BJ (cell line): ENCODE measurements at regions of chr12 and their contacts with region 1.

Region 1: DNA sequence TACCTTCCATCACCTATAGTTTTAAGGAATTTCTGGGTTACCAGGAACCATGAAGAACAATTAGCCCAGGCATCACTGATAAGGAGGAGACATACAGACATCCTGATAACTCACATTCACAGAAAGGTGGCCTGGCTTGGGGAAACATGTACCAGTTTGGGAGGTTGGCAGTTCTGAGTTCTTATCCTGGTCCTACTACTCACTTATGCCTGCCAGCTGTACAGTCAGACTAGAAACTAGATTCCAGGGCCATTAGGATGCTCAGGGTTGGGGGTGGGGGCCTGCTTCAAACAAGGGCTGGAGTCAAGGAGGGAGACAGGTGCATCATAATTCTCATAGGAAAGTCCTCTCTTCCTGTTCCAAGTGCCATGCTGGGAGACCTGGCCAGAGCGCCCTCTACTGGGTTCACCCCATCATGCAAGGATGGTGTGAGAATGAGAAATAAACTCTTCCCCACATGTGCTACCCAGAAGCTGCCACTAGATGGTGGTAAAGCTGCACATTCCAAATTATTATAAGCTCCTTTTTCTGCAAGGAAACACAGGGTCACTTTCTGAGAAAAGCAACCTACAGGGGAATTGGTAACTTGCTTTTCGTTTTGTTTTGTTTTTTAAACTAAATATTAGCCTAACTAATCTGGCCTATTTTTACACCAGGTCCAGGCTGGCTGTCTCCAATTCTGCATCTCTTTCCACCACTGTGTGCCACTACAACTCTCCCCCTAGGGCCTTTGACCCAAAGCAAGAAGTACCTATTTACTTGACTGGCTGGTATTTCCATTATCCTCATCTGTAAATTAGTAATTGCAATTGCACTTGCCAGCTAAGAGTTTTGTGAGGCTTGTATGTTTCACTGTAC is 14.5 kb downstream of the OAS2 start:
- DNase-seq: peak; percentile 8
- H3K4me3 ChIP-seq: no peak overlapping the region
- H3K27me3 ChIP-seq: no peaks in the 10 kb centered on the region; the same call in 1 of the 2 replicates
- CTCF ChIP-seq: peak; percentile 91

Region 2: GRCh38 chr12:112978163-112979040 is 14.4 kb before region 1 on chr12 and contains the start of gene OAS2:
- CTCF ChIA-PET with region 1: interaction called, 27 read pairs
- POLR2A ChIA-PET with region 1: no interaction called
- DNase-seq: peak; percentile 50
- H3K4me3 ChIP-seq: peak within 1 kb of the TSS; percentile 23
- H3K27me3 ChIP-seq: no peaks in the 10 kb centered on the region
- CTCF ChIP-seq: no peak
- polyA plus RNA-seq, gene OAS2: 1.2 and 1.9 TPM in 2 replicates

Region 3: DNA sequence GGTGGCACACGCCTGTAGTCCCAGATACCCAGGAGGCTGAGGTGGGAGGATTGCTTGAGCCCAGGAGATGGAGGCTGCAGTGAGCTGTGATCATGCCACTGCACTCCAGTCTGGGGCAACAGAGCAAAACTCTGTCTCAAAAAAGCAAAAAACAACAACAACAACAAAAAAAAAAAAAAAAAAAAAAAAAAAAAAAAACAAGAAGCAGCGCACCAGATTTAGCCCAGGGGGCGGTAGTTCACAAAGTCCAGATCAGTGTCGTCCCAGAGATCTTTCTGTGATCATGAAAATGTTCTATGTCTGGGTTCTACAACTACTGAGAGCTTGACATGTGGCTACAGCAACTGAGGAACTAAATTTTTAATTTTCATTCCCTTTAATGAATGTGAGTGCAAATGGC is 13.0 kb after region 1 on chr12:
- CTCF ChIA-PET with region 1: interaction called, 23 read pairs
- POLR2A ChIA-PET with region 1: no interaction called
- DNase-seq: no peak
- H3K4me3 ChIP-seq: no peak overlapping the region
- H3K27me3 ChIP-seq: no peaks in the 10 kb centered on the region; the same call in 1 of the 2 replicates
- CTCF ChIP-seq: peak; percentile 37

Region 4: DNA sequence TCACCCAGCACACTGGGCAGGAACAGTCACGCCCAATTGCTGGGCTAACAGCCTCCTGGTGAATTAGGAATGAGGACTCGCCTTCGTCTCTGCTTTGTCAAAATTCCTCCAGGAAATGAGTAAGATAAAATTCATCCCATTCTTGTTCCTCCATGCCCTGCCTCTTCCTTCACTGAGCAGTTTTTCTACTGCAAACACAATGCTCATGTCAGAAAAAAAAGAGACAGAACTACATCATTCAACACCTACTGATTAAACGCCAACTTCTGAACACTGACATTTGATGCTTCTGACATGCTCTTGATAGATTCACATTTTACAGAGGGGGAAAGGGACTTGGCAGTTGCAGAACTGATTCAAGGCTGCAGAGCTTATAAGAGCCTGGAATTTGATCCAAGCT is 26.3 kb after region 1 on chr12:
- CTCF ChIA-PET with region 1: interaction called, 11 read pairs
- POLR2A ChIA-PET with region 1: no interaction called
- DNase-seq: no peak
- H3K4me3 ChIP-seq: no peak overlapping the region
- H3K27me3 ChIP-seq: peaks cover 3% of the 10 kb centered on the region; the same call in 1 of the 2 replicates
- CTCF ChIP-seq: no peak

Region 5: DNA sequence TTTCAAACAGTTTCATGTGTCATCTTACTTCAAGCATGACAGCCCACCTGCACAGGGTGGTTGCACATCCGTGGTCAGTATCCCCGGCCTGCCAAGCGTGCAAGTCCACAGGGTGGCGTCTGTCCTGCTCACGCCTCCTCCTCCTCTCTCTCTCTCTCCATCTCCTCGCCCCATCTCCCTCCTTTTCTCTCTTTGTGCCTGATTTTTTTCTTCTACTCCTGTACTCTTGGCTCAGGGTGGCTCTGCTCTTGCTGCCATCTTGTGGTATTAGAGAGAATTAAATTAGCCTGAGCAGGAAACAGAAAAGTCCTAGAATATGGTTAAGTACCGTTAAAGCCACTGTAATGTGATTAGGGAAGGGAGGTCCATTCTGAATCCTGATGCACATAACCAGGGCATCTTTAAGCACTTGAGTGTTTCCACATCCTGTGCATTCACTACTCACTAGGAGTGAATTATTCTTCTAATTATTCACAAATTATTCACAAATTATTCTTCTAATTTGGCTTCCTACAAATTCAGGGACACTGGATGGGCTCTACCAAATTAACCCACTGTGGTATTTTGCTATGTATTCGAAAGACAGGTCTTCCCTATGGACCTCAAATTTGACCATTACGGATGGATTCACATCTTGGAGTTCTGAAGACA is 38.2 kb after region 1 on chr12:
- CTCF ChIA-PET with region 1: interaction called, 28 read pairs
- POLR2A ChIA-PET with region 1: no interaction called
- DNase-seq: no peak
- H3K4me3 ChIP-seq: no peak overlapping the region
- H3K27me3 ChIP-seq: peaks cover 3% of the 10 kb centered on the region; the same call in 1 of the 2 replicates
- CTCF ChIP-seq: peak; percentile 71

Region 6: GRCh38 chr12:113055594-113056380 is 63.0 kb after region 1 on chr12:
- CTCF ChIA-PET with region 1: no interaction called
- POLR2A ChIA-PET with region 1: no interaction called
- DNase-seq: no peak
- H3K4me3 ChIP-seq: no peak overlapping the region
- H3K27me3 ChIP-seq: peaks cover 25% of the 10 kb centered on the region
- CTCF ChIP-seq: no peak

Region 7: GRCh38 chr12:113174461-113175384 is 182.0 kb after region 1 on chr12:
- CTCF ChIA-PET with region 1: interaction called, 15 read pairs
- POLR2A ChIA-PET with region 1: no interaction called
- DNase-seq: no peak
- H3K4me3 ChIP-seq: no peak overlapping the region
- H3K27me3 ChIP-seq: no peaks in the 10 kb centered on the region
- CTCF ChIP-seq: peak; percentile 99

Region 8: DNA sequence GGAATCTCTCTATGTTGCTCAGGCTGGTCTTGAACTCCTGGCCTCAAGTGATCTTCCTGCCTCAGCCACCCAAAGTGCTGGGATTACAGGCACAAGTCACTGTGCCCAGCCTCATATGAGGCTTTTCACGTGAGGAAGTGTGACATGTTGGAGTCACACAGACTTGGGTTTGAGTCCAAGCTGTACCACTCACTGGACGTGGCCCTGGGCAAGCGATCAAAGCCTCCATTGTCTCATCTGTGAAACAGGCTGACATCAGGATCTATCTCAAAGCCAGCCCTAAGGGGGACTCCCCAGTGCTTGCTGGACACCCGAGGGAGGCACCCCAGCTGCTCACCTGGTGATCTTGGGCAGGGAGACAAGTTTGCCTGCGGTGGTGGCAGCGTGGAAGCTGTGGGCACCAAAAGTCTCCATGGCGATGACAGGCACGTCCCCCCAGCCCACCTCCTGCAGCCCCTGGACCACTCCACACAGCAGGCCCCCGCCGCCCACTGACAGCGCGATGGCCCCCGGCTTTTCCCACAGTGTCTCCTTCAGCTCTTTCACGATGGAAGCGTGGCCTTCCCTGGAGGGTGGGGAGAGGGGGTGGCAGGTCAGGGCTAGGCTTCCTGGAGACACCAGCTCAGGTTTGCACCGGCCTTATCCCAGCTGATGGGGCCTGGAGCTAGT is 404.2 kb after region 1 on chr12:
- CTCF ChIA-PET with region 1: no interaction called
- POLR2A ChIA-PET with region 1: no interaction called
- DNase-seq: no peak
- H3K4me3 ChIP-seq: no peak overlapping the region
- H3K27me3 ChIP-seq: no peaks in the 10 kb centered on the region
- CTCF ChIP-seq: no peak